Sigmoid colon (tissue), 7 donors: ENCODE measurements at regions of chr1 and their contacts with region 1.

Region 1: GRCh38 chr1:111747282-111747734 is 8.1 kb upstream of the INKA2 start:
- DNase-seq: no peak
- H3K4me3 ChIP-seq: no peak overlapping the region
- H3K27ac ChIP-seq: peak overlapping the region in 2 of 4 donors; percentile 75 to 77
- H3K4me1 ChIP-seq: peaks cover 0 to 69% (median 38%) of the 10 kb centered on the region in 4 donors
- H3K27me3 ChIP-seq: no peaks in the 10 kb centered on the region
- CTCF ChIP-seq: peak in 3 of 4 experiments; percentile 42 to 48 (median 42)
- EP300 ChIP-seq: no peak
- POLR2A ChIP-seq: no peak

Region 2: DNA sequence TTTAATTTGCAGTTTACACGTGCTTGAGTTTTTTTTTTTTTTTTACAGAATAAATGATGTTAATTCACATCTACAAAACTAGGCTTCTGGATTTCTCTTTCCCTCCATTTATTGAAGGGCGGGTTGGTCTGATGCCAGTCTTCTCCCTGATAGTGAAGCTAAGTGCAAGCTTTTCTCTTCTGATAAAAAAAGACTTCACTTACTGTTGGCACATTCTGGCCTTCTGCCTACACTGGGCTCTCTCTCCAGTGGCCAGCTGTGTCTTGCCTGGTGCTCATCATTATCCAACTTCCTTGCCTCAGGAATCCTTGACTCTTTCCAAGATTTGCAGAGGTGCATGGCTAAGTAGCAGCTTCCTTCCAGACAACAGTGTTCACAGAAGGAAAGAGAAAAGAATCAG is 135.3 kb before region 1 on chr1:
- intact Hi-C with region 1: loop called (anchors 5 kb)
- DNase-seq: peak; percentile 76
- H3K4me3 ChIP-seq: no peak overlapping the region
- H3K27ac ChIP-seq: peak overlapping the region; percentile 55 to 83 (median 74)
- H3K4me1 ChIP-seq: peaks cover 2 to 78% (median 50%) of the 10 kb centered on the region in 4 donors
- H3K27me3 ChIP-seq: no peaks in the 10 kb centered on the region
- CTCF ChIP-seq: no peak
- EP300 ChIP-seq: no peak
- POLR2A ChIP-seq: no peak